GM12878 (cell line): ENCODE measurements at regions of chr4 and their contacts with region 1.

Region 1: GRCh38 chr4:16116493-16116990 is 32.7 kb upstream of the PROM1 start:
- DNase-seq: no peak
- ATAC-seq: no peak
- H3K4me3 ChIP-seq: no peak overlapping the region
- H3K27ac ChIP-seq: no peak overlapping the region
- H3K4me1 ChIP-seq: no peaks in the 10 kb centered on the region
- H3K27me3 ChIP-seq: no peaks in the 10 kb centered on the region
- CTCF ChIP-seq: no peak
- EP300 ChIP-seq: no peak
- POLR2A ChIP-seq: no peak
- RAD21 ChIP-seq: no peak

Region 2: DNA sequence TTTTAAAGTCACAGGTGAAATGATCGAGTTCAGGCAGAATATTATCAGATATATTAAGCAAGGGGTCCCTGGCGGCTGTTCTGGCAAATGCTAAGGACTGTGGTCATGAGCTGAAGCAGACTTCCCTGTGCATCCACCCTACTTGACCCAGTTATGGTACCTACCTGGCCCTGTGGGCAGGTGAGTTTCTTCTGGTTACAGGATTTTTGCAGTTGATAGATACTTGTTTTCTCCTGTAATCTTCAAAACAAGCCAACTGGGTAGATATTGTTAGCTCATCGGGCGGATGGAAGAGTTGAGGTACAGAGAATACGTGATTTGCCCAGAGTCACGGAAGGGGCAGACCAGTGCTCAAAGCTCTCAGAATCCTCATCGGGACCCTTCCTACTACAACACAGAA is 14.2 kb before region 1 on chr4:
- CTCF ChIA-PET with region 1: no interaction called
- POLR2A ChIA-PET with region 1: no interaction called
- RAD21 ChIA-PET with region 1: no interaction called
- SMC1A ChIA-PET with region 1: interaction called, 3 read pairs
- in situ Hi-C with region 1: no loop called
- intact Hi-C with region 1: loop called (anchors 1 kb)
- DNase-seq: no peak
- ATAC-seq: no peak
- H3K4me3 ChIP-seq: no peak overlapping the region
- H3K27ac ChIP-seq: no peak overlapping the region
- H3K4me1 ChIP-seq: no peaks in the 10 kb centered on the region
- H3K27me3 ChIP-seq: no peaks in the 10 kb centered on the region
- CTCF ChIP-seq: no peak
- EP300 ChIP-seq: no peak
- POLR2A ChIP-seq: no peak
- RAD21 ChIP-seq: no peak